ENCODE measurements at regions of chr11 and their contacts with region 1.

Region 1: DNA sequence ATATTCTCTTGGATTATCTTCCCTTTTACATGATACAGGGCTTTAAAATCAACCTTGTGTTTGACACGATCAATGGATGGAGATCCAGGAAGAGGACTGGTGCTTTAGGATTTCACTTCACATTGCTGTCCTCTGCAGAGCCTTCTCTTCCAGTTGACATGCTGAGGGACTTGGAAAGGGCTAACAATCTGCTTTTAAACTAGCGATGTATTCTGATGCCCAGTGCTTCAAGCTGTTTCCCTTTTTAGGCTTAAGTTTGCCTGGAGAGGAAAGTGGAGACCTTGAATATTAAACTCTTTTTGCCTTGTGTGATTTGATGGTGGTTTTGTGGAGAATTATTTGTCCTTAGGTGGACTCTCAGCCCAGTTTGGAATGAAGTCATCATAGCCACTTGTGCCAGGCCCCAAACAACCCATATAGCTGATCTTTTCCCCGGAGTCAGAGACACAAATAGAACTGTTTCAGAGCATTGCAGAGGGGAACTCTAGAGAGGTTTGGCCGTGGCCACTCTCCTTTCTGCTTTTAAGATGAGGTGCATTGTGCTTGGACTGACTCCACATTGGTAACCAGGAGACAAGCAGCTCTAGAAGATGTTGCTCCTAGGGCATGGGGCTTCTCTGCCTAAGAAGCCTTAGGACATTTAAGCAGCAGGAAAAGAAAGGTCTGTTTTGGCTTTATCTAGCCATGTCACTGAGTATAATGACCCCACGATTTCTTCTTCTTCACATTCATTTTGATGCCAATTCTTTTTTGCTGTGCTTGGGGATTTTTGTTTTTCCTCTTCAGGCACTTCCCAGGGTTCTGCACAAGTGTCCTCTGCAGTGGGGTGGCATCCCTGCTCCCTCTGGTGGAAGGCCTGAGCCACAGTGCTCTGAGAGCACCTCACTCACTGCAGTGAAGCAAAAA is 152.8 kb downstream of the NCAM1 start:
- DNase-seq: peak; percentile 77
- H3K4me3 ChIP-seq: no peak overlapping the region
- H3K27ac ChIP-seq: no peak overlapping the region
- H3K4me1 ChIP-seq: no peaks in the 10 kb centered on the region
- H3K27me3 ChIP-seq: no peaks in the 10 kb centered on the region
- CTCF ChIP-seq: peak; percentile 86

Region 2: GRCh38 chr11:112451250-112451649 is 662.8 kb before region 1 on chr11:
- CTCF ChIA-PET with region 1: no interaction called
- POLR2A ChIA-PET with region 1: no interaction called
- intact Hi-C with region 1: no loop called
- DNase-seq: no peak
- H3K4me3 ChIP-seq: no peak overlapping the region
- H3K27ac ChIP-seq: no peak overlapping the region
- H3K4me1 ChIP-seq: peaks cover 18% of the 10 kb centered on the region
- H3K27me3 ChIP-seq: no peaks in the 10 kb centered on the region
- CTCF ChIP-seq: no peak

Region 3: GRCh38 chr11:112795142-112795815 is 318.8 kb before region 1 on chr11:
- CTCF ChIA-PET with region 1: interaction called, 5 read pairs
- POLR2A ChIA-PET with region 1: no interaction called
- intact Hi-C with region 1: loop called (anchors 2 kb)
- DNase-seq: peak; percentile 81
- H3K4me3 ChIP-seq: no peak overlapping the region
- H3K27ac ChIP-seq: no peak overlapping the region
- H3K4me1 ChIP-seq: no peaks in the 10 kb centered on the region
- H3K27me3 ChIP-seq: no peaks in the 10 kb centered on the region
- CTCF ChIP-seq: peak; percentile 81

Region 4: DNA sequence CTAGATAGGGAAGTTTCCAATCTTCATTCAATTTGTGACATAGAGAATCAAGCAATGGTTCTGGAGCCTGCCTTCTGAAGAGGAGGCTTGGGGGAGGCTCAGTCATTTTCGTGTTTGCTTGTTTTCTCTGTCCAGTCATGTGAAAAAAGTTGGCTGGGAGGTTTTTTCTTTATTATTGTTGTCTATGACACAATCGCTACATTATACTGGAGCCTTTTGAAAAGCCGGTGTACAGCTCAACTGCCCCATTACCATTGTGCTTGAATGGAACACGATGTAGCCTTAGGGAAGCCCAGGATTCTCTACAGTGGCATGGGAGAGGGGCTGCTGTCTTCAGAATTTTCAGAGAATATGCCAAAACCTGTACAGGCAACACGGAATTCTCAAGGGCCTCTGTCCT is 210.7 kb before region 1 on chr11:
- CTCF ChIA-PET with region 1: no interaction called
- POLR2A ChIA-PET with region 1: no interaction called
- intact Hi-C with region 1: no loop called
- DNase-seq: no peak
- H3K4me3 ChIP-seq: no peak overlapping the region
- H3K27ac ChIP-seq: no peak overlapping the region
- H3K4me1 ChIP-seq: peaks cover 20% of the 10 kb centered on the region
- H3K27me3 ChIP-seq: peaks cover 8% of the 10 kb centered on the region
- CTCF ChIP-seq: no peak

Region 5: GRCh38 chr11:112961146-112961668 is 152.8 kb before region 1 on chr11 and contains the start of gene NCAM1:
- CTCF ChIA-PET with region 1: no interaction called
- POLR2A ChIA-PET with region 1: no interaction called
- intact Hi-C with region 1: loop called (anchors 5 kb)
- DNase-seq: peak; percentile 96
- H3K4me3 ChIP-seq: peak within 1 kb of the TSS; percentile 61
- H3K27ac ChIP-seq: no peak within 1 kb of the TSS
- H3K4me1 ChIP-seq: peaks cover 3% of the 10 kb centered on the region
- H3K27me3 ChIP-seq: peaks cover 35% of the 10 kb centered on the region
- CTCF ChIP-seq: no peak
- total RNA-seq, gene NCAM1: 12.0 and 14.3 TPM in 2 replicates